CD4-positive, alpha-beta T cell (primary cell): ENCODE measurements at regions of chr11 and their contacts with region 1.

Region 1: DNA sequence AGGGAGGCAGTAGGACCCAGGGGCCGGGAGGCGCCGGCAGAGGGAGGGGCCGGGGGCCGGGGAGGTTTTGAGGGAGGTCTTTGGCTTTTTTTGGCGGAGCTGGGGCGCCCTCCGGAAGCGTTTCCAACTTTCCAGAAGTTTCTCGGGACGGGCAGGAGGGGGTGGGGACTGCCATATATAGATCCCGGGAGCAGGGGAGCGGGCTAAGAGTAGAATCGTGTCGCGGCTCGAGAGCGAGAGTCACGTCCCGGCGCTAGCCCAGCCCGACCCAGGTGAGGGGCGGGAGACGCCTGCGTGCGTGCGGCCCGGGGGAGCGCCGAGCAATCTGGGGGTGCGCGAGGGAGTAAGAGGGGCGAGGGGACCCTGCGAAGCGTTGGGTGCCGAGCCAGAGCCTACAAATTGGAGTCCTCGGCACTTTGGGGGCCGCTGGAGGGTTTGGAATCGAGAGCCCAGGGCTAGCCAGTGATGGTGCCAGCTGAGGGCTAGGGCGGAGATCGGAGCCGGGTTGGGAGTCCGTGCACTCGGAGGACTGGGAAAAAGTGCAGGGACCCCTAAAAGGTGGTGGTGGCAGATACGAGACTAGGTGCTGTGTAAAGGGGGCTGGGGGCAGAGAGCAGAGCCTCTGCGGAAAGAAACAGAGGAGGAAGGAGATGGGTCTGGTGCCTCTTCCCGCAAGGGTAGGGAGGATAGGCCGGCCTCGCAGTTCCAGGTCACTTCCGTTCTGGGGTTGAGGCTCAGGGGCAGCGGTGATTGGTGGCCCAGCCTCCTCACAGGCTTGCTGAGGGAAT is at the start of gene SERPINH1:
- DNase-seq: peak in 13 of 14 experiments; percentile 22 to 76 (median 49)
- ATAC-seq: peak; percentile 78
- H3K4me3 ChIP-seq: peak within 1 kb of the TSS; percentile 93
- H3K4me3 Mint-ChIP-seq: peak within 1 kb of the TSS; percentile 99
- H3K27ac ChIP-seq: peak within 1 kb of the TSS; percentile 41 to 79
- H3K27ac Mint-ChIP-seq: peak within 1 kb of the TSS; percentile 94
- H3K4me1 ChIP-seq: peaks cover 42% of the 10 kb centered on the region
- H3K4me1 Mint-ChIP-seq: peaks cover 47% of the 10 kb centered on the region
- H3K27me3 ChIP-seq: no peaks in the 10 kb centered on the region
- H3K27me3 Mint-ChIP-seq: no peaks in the 10 kb centered on the region
- CTCF ChIP-seq: no peak
- total RNA-seq, gene SERPINH1: 3.5 to 4.1 TPM

Region 2: DNA sequence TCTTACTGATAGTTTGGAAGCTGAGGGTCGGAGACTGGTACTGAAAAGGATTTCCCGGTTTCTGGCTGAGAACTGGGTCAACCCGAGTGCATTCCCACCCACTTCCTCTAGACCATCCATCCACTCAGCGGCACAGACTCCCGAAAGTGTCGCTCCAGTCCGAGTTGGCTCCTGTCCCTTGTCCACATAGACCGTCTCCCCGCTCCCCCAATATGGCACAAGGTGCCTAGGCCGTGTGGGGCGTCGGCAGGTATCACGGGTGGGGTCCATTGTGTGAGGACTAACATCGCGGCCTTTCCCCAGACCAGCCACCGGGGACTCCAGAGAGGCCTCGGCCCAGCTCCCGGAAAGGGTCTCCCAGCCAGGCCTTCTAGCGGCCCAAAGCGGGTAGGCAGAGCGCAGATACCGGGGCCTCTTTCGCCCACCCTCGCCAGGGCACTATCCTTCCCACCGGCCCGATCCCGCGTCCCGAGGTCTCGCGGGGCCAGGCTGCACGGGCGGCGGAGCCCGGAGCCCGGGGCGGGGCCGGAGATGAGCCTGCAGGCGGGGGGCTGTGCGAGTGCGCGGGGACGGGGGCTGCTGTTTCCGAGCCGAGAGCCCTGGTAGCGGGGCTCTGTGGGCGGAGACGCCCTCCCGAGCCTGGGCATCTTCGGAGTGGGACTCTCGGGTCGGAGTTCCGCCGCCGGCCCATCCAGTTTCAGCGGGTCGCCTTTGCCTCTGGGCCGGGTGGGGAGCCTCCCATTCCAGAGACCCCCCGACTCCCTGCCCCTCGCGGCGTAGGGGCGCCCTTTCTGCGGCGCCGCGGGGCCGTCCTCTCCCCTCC is 20.9 kb after region 1 on chr11:
- CTCF ChIA-PET with region 1: no interaction called
- POLR2A ChIA-PET with region 1: interaction called, 16 read pairs
- intact Hi-C with region 1: no loop called
- DNase-seq: peak in 13 of 14 experiments; percentile 13 to 79 (median 45)
- ATAC-seq: peak; percentile 96
- H3K4me3 ChIP-seq: peak overlapping the region; percentile 84
- H3K4me3 Mint-ChIP-seq: peak overlapping the region; percentile 94
- H3K27ac ChIP-seq: peak overlapping the region; percentile 10 to 19
- H3K27ac Mint-ChIP-seq: peak overlapping the region; percentile 71
- H3K4me1 ChIP-seq: peaks cover 18% of the 10 kb centered on the region
- H3K4me1 Mint-ChIP-seq: peaks cover 14% of the 10 kb centered on the region
- H3K27me3 ChIP-seq: no peaks in the 10 kb centered on the region
- H3K27me3 Mint-ChIP-seq: no peaks in the 10 kb centered on the region
- CTCF ChIP-seq: no peak